ENCODE measurements at regions of chr2 and their contacts with region 1.

Region 1: GRCh38 chr2:204177977-204178540 is 241.5 kb downstream of the ICOS start:
- DNase-seq: peak; percentile 28
- CTCF ChIP-seq: peak; percentile 61

Region 2: GRCh38 chr2:204072443-204073324 is 105.4 kb before region 1 on chr2:
- CTCF ChIA-PET with region 1: interaction called, 16 read pairs
- POLR2A ChIA-PET with region 1: no interaction called
- DNase-seq: peak; percentile 41
- CTCF ChIP-seq: peak; percentile 28

Region 3: GRCh38 chr2:204145263-204145751 is 32.8 kb before region 1 on chr2:
- CTCF ChIA-PET with region 1: interaction called, 35 read pairs
- POLR2A ChIA-PET with region 1: no interaction called
- DNase-seq: peak; percentile 64
- CTCF ChIP-seq: peak; percentile 95

Region 4: GRCh38 chr2:204159526-204159925 is 18.5 kb before region 1 on chr2:
- CTCF ChIA-PET with region 1: interaction called, 12 read pairs
- POLR2A ChIA-PET with region 1: no interaction called
- DNase-seq: no peak
- CTCF ChIP-seq: no peak